HEK293 (cell line): ENCODE measurements at regions of chr19 and their contacts with region 1.

Region 1: DNA sequence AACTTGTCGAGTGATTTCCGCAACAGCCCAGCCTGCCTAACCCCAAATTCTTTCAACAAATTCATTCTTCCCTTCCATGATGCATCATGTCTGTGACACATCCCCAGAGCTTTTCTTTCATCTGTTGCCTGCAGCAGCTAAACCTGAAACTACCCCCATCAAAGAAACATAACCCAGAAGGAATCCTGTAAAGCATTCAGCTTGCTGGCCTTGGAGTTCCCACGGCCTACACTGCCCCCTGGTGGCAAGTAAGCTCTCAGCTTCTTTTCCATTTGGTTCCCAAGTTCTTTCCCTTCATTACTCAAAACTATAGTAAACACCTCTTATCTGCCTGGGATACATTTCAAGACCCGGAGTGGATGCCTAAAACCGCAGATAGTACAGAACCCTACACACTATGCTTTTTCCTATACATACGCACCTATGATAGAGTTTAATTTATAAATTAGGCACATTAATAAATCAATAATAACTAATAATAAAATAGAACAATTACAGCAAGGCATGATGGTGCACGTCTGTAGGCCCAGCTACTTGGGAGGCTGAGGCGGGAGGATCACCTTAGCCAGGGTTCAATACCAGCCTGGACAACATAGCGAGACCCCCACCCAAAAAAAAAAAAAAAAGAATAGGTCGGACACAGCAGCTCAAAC is 7.4 kb downstream of the ETHE1 start:
- H3K4me3 ChIP-seq: no peak overlapping the region
- H3K27ac ChIP-seq: no peak overlapping the region
- H3K4me1 ChIP-seq: peaks cover 3% of the 10 kb centered on the region; the same call in 1 of the 2 replicates
- CTCF ChIP-seq: peak; percentile 92

Region 2: GRCh38 chr19:43438291-43439096 is 81.1 kb before region 1 on chr19:
- CTCF ChIA-PET with region 1: interaction called, 749 read pairs
- POLR2A ChIA-PET with region 1: interaction called, 11 read pairs
- H3K4me3 ChIP-seq: no peak overlapping the region
- H3K27ac ChIP-seq: no peak overlapping the region
- H3K4me1 ChIP-seq: peaks cover 10% of the 10 kb centered on the region
- CTCF ChIP-seq: no peak

Region 3: DNA sequence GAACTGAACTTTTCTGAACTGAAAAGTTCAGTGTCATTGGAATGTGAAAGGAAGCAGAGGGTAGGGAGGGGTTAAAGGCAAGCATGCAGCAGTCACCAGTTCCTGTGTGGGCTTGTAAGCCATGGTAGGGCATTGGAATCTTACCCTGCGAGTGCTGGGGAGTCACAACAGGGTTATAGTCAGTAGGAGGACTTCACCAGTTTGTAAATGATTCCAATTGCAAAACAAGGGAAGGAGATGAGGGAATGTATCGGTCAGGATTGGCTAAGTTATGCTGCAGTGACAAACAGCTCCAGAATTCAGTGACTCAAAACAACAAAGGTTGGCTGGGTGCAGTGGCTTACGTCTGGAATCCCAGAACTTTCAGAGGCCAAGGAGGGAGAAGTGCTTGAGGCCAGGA is 67.0 kb before region 1 on chr19:
- CTCF ChIA-PET with region 1: interaction called, 749 read pairs
- POLR2A ChIA-PET with region 1: interaction called, 9 read pairs
- H3K4me3 ChIP-seq: no peak overlapping the region
- H3K27ac ChIP-seq: no peak overlapping the region
- H3K4me1 ChIP-seq: peaks cover 3% of the 10 kb centered on the region; the same call in 1 of the 2 replicates
- CTCF ChIP-seq: no peak

Region 4: GRCh38 chr19:43457809-43458208 is 61.8 kb before region 1 on chr19:
- CTCF ChIA-PET with region 1: interaction called, 22 read pairs
- POLR2A ChIA-PET with region 1: interaction called, 10 read pairs
- H3K4me3 ChIP-seq: no peak overlapping the region
- H3K27ac ChIP-seq: no peak overlapping the region
- H3K4me1 ChIP-seq: peaks cover 3% of the 10 kb centered on the region; the same call in 1 of the 2 replicates
- CTCF ChIP-seq: no peak

Region 5: GRCh38 chr19:43503501-43504425 is 15.8 kb before region 1 on chr19:
- CTCF ChIA-PET with region 1: interaction called, 47 read pairs
- POLR2A ChIA-PET with region 1: interaction called, 10 read pairs
- H3K4me3 ChIP-seq: peak overlapping the region; percentile 78
- H3K27ac ChIP-seq: peak overlapping the region; percentile 77
- H3K4me1 ChIP-seq: peaks cover 15% of the 10 kb centered on the region; the same call in 1 of the 2 replicates
- CTCF ChIP-seq: peak; percentile 96

Region 6: DNA sequence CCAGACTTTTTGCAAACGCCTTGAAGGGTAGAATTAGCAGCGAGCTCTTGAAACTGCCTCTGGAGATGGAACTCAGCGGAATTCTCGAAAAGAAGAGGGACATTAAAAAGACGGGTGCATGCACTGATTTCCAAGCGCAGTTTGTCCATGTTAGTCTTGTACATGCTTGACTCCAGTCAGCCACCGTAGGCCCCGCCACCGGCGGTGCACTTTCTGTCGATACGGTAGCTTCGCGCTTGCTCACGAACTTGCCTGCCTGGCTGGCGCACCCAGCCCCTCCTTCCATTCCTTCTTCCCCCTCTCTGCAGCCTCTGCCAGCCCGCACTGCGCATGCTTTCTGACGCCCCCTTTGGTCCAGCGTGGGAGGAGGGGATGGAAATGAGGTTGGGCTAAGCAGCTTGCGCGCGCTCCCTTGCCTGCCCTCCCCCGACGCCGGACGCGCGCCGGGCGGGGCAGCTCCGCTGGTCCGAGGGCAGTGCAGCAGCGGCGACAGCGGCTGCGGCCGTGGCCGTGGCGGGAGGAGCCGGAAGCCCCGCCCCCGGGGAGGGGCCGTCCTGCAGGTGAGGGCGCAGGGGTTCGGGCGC is 13.5 kb after region 1 on chr19 and contains the start of gene ZNF575:
- CTCF ChIA-PET with region 1: interaction called, 58 read pairs
- POLR2A ChIA-PET with region 1: interaction called, 7 read pairs
- H3K4me3 ChIP-seq: peak within 1 kb of the TSS; percentile 9
- H3K27ac ChIP-seq: peak within 1 kb of the TSS; percentile 73
- H3K4me1 ChIP-seq: peaks cover 26% of the 10 kb centered on the region
- CTCF ChIP-seq: no peak; the same call in 1 of the 2 replicates

Region 7: DNA sequence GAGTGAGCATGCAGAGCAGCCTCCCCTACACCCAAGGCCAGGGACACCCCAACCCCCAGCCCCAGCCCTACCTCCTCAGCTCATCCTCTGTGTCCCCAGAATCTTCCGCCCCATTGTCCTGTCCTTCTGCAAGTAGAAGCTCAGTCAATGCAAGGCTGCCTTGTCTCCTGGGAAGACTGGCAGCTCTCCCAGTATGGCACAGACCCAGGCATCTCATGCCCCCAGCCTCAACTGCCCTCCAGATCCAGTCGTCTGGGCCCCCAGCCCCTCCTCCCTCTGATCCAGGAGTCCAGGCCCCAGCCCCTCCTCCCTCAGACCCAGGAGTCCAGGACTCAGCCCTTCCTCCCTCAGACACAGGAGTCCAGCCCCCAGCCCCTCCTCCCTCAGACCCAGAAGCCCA is 26.4 kb after region 1 on chr19:
- CTCF ChIA-PET with region 1: no interaction called
- POLR2A ChIA-PET with region 1: no interaction called
- H3K4me3 ChIP-seq: no peak overlapping the region
- H3K27ac ChIP-seq: no peak overlapping the region
- H3K4me1 ChIP-seq: no peaks in the 10 kb centered on the region
- CTCF ChIP-seq: no peak